Activated T-helper 1 cell treated with anti-CD3 and anti-CD28 coated beads, Interleukin-12 subunit alpha, Interleukin-12 subunit beta, Interleukin-2, Interleukin-4 antibody, amounts not matched to agents 30 ng/mL and 10 ng/mL and 1 ng/mL, durations not matched to agents 14 hours and 24 hours and 36 hours (primary cell): ENCODE measurements at regions of chr11 and their contacts with region 1.

Region 1: DNA sequence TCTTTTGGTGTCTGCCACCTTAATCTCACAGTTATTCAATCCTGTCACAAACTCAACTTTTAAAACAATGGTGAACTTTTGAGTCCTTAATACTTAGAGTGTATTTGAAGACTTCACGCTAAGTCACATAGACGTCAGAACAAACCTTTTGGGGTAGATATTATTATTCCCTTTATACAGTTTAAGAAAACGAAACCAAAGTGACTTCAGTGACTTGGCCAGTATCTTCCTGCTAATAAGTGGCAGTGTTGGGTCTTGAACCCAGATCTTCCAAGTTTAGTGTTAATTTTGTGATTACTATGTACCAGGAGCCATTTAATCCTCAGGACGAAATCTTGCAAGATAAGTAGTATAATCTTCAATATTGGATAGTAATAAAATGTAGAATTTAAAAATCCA is 694 bp downstream of the CEP295 start:
- DNase-seq: no peak
- H3K4me3 Mint-ChIP-seq: peak overlapping the region; percentile 89
- H3K27ac Mint-ChIP-seq: peak overlapping the region; percentile 86
- H3K4me1 Mint-ChIP-seq: peaks cover 47% of the 10 kb centered on the region
- H3K27me3 Mint-ChIP-seq: no peaks in the 10 kb centered on the region

Region 2: DNA sequence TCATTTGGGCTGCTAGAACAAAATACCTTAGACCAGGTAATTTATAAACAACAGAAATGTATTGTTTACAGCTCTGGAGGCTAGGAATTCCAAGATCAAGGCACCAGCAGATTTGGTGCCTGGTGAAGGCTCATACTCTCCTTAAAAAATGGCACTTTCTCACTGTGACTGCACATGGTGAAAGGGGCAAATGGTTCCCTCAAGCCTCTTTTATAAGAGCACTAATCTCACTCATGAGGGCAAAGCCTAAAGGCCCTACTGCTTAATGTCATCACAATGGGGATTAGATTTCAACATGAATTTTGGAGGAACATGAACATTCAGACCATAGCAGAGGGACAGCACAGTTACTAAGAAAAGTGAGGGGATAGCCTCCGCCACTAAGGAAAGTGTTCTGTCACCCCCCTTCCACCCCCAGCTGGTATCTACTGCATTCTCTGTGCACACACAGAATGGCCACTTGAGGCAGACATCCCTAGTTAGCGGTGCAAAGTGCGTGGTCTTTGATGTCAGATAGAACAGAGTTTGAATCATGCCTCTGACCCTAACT is 47.9 kb before region 1 on chr11:
- intact Hi-C with region 1: loop called (anchors 2 kb)
- DNase-seq: no peak
- H3K4me3 Mint-ChIP-seq: no peak overlapping the region
- H3K27ac Mint-ChIP-seq: no peak overlapping the region
- H3K4me1 Mint-ChIP-seq: no peaks in the 10 kb centered on the region
- H3K27me3 Mint-ChIP-seq: peaks cover 2% of the 10 kb centered on the region

Region 3: GRCh38 chr11:93784152-93784934 is 122.2 kb after region 1 on chr11 and contains the start of gene MED17:
- intact Hi-C with region 1: loop called (anchors 1 kb)
- DNase-seq: peak; percentile 87
- H3K4me3 Mint-ChIP-seq: peak within 1 kb of the TSS; percentile 93
- H3K27ac Mint-ChIP-seq: peak within 1 kb of the TSS; percentile 88
- H3K4me1 Mint-ChIP-seq: peaks cover 45% of the 10 kb centered on the region
- H3K27me3 Mint-ChIP-seq: no peaks in the 10 kb centered on the region
- total RNA-seq, gene MED17: 55.8 and 59.4 TPM in 2 replicates

Region 4: DNA sequence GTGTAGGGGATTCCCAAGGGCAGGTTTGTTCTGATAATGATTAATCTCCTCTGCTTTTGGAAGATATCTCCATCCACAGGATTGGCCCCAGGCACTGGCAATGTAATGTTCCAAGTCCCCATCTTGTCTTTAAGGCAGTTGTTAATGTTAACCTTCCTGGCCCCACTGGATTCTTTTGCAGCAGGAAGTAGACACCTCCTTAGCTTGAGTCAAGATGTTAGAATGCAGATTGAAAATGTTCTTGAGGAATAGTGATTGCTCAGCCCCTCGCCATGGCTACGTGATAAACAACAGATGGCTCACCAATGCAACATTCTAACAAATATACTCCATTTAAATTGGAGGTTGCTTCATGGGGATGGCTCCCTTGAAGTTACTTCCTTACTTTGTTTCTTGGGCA is 366.3 kb after region 1 on chr11:
- intact Hi-C with region 1: no loop called
- DNase-seq: no peak
- H3K4me3 Mint-ChIP-seq: no peak overlapping the region
- H3K27ac Mint-ChIP-seq: no peak overlapping the region
- H3K4me1 Mint-ChIP-seq: no peaks in the 10 kb centered on the region
- H3K27me3 Mint-ChIP-seq: no peaks in the 10 kb centered on the region